ENCODE measurements at regions of chr16 and their contacts with region 1.

Region 1: GRCh38 chr16:87778830-87779579 is 13.2 kb upstream of the KLHDC4 start:
- DNase-seq: peak; percentile 96
- ATAC-seq: peak; percentile 89
- H3K4me3 ChIP-seq: no peak overlapping the region
- H3K4me3 Mint-ChIP-seq: peak overlapping the region; percentile 75
- H3K27ac ChIP-seq: no peak overlapping the region
- H3K27ac Mint-ChIP-seq: peak overlapping the region; percentile 83
- H3K4me1 ChIP-seq: peaks cover 22 to 40% of the 10 kb centered on the region in 2 donors
- H3K4me1 Mint-ChIP-seq: peaks cover 33% of the 10 kb centered on the region
- H3K27me3 ChIP-seq: no peaks in the 10 kb centered on the region
- H3K27me3 Mint-ChIP-seq: peaks cover 9% of the 10 kb centered on the region
- CTCF ChIP-seq: peak; percentile 93

Region 2: DNA sequence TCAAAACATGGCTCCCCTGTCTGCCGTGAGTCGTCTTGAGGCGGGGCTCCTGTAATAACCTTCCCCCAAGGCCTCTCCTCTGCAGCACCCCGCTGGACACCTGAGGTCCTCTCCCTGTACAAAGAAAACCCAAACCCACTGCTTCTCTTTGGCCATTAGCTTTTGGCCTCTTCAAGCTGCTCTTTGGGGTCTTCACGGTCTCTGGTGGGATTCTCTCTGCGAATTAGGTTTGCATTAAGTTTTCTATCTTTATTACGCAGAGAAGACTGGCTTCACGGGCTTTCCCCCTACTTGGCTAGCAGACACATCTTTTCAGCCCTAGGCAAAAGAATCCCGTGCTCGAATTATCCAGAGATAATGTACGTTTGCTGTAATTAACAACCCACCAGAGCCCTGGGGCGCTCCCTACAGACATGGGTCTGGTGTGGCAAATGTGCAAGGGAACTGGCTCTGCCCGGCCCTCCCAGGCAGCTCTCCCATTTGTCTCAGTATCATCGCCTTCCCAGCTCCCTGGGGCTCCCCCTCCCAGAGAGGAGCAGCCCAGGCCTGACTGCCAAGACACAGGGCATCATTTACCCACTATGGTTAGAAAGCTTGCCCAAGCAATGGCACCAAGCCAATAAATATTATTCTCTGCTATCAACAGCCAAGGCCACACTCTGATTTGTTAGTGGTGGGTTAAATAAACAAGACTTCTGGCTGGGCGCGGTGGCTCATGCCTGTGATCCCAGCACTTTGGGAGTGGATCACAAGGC is 11.4 kb after region 1 on chr16:
- CTCF ChIA-PET with region 1: interaction called, 23 read pairs
- POLR2A ChIA-PET with region 1: no interaction called
- intact Hi-C with region 1: no loop called
- DNase-seq: no peak
- ATAC-seq: no peak
- H3K4me3 ChIP-seq: no peak overlapping the region
- H3K4me3 Mint-ChIP-seq: no peak overlapping the region
- H3K27ac ChIP-seq: no peak overlapping the region
- H3K27ac Mint-ChIP-seq: no peak overlapping the region
- H3K4me1 ChIP-seq: no peaks in the 10 kb centered on the region
- H3K4me1 Mint-ChIP-seq: no peaks in the 10 kb centered on the region
- H3K27me3 ChIP-seq: no peaks in the 10 kb centered on the region
- H3K27me3 Mint-ChIP-seq: no peaks in the 10 kb centered on the region
- CTCF ChIP-seq: no peak

Region 3: GRCh38 chr16:87828071-87828971 is 49.3 kb after region 1 on chr16:
- CTCF ChIA-PET with region 1: interaction called, 11 read pairs
- POLR2A ChIA-PET with region 1: no interaction called
- intact Hi-C with region 1: no loop called
- DNase-seq: no peak
- ATAC-seq: no peak
- H3K4me3 ChIP-seq: no peak overlapping the region
- H3K4me3 Mint-ChIP-seq: no peak overlapping the region
- H3K27ac ChIP-seq: no peak overlapping the region
- H3K27ac Mint-ChIP-seq: no peak overlapping the region
- H3K4me1 ChIP-seq: peaks cover 1 to 16% of the 10 kb centered on the region in 2 donors
- H3K4me1 Mint-ChIP-seq: peaks cover 15% of the 10 kb centered on the region
- H3K27me3 ChIP-seq: no peaks in the 10 kb centered on the region
- H3K27me3 Mint-ChIP-seq: peaks cover 3% of the 10 kb centered on the region
- CTCF ChIP-seq: no peak

Region 4: DNA sequence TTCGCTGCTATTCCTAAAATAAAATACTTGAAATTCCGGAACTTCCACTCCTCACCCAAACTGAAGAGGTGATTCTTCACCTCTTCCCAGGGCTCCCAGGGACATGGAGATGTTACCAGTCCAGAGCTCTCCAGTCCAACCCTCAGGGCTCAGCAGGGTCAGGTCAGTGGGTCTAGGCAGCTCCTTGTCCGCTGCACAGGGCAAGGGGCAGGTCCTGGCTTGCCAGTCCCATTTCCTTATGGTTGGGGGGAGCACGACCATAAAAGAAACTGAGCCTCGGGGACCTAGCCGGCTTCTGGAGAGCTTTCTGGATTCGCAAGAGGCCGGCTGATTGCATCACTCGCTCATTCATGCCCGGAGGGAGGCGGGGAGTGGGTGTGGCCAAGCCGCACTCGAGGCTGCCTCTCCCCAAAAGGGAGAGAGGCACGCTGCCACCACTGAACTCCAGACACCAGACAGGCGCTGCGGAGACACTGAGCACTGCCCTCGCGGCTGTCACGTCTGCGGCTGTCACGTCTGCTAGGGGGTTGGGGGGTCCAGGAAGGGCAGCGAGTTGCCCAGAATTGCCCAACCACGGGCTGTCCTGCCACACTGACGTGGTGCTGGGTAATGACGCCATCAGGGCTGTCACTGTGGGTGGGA is 74.5 kb after region 1 on chr16:
- CTCF ChIA-PET with region 1: interaction called, 47 read pairs
- POLR2A ChIA-PET with region 1: interaction called, 3 read pairs
- intact Hi-C with region 1: loop called (anchors 5 kb)
- DNase-seq: peak; percentile 80
- ATAC-seq: peak; percentile 69
- H3K4me3 ChIP-seq: peak overlapping the region in 2 of 5 experiments; percentile 22 to 46
- H3K4me3 Mint-ChIP-seq: peak overlapping the region; percentile 71
- H3K27ac ChIP-seq: no peak overlapping the region
- H3K27ac Mint-ChIP-seq: peak overlapping the region; percentile 15
- H3K4me1 ChIP-seq: peaks cover 4 to 37% of the 10 kb centered on the region in 2 donors
- H3K4me1 Mint-ChIP-seq: peaks cover 29% of the 10 kb centered on the region
- H3K27me3 ChIP-seq: no peaks in the 10 kb centered on the region
- H3K27me3 Mint-ChIP-seq: no peaks in the 10 kb centered on the region
- CTCF ChIP-seq: no peak

Region 5: DNA sequence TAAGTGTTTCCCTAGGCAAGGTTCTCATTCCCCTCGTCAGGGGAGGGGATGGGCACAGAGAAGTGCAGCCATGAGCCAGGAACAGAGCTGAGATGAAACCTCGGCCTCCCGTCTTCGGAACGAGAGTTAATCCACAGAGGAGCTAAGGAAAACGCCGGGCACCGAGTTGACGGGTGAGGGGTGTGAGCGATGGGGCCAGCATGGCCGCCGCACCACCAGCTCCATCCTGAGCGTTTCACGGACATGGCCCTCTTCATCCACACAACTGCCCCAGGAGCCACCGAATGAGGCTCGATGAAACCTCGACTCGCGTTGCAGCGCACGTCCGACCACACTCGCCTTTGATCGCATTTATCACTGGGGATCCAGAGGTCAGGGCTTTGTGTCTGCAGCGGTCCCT is 135.8 kb after region 1 on chr16:
- CTCF ChIA-PET with region 1: interaction called, 15 read pairs
- POLR2A ChIA-PET with region 1: interaction called, 5 read pairs
- intact Hi-C with region 1: no loop called
- DNase-seq: no peak
- ATAC-seq: no peak
- H3K4me3 ChIP-seq: no peak overlapping the region
- H3K4me3 Mint-ChIP-seq: no peak overlapping the region
- H3K27ac ChIP-seq: no peak overlapping the region
- H3K27ac Mint-ChIP-seq: no peak overlapping the region
- H3K4me1 ChIP-seq: peaks cover under 1% of the 10 kb centered on the region in 2 donors
- H3K4me1 Mint-ChIP-seq: no peaks in the 10 kb centered on the region
- H3K27me3 ChIP-seq: peaks cover 0 to 10% (median 1%) of the 10 kb centered on the region in 4 experiments
- H3K27me3 Mint-ChIP-seq: peaks cover 25% of the 10 kb centered on the region
- CTCF ChIP-seq: no peak

Region 6: DNA sequence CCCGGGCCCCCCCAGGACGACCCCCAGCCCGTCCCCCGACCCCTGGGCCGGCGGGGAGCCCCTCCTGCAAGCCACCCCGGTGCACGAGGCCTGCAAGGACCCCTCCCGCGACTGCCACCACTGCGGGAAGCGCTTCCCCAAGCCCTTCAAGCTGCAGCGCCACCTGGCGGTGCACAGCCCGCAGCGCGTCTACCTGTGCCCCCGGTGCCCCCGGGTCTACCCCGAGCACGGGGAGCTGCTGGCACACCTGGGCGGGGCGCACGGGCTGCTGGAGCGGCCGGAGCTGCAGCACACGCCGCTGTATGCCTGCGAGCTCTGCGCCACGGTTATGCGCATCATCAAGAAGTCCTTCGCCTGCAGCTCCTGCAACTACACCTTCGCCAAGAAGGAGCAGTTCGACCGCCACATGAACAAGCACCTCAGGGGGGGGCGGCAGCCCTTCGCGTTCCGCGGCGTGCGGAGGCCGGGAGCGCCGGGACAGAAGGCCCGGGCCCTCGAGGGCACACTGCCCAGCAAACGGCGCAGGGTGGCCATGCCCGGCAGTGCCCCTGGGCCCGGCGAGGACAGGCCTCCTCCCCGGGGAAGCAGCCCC is 658.5 kb after region 1 on chr16:
- CTCF ChIA-PET with region 1: interaction called, 26 read pairs
- POLR2A ChIA-PET with region 1: no interaction called
- intact Hi-C with region 1: loop called (anchors 2 kb)
- DNase-seq: peak; percentile 79
- ATAC-seq: peak; percentile 82
- H3K4me3 ChIP-seq: no peak overlapping the region
- H3K4me3 Mint-ChIP-seq: no peak overlapping the region
- H3K27ac ChIP-seq: no peak overlapping the region
- H3K27ac Mint-ChIP-seq: no peak overlapping the region
- H3K4me1 ChIP-seq: no peaks in the 10 kb centered on the region
- H3K4me1 Mint-ChIP-seq: no peaks in the 10 kb centered on the region
- H3K27me3 ChIP-seq: no peaks in the 10 kb centered on the region
- H3K27me3 Mint-ChIP-seq: no peaks in the 10 kb centered on the region
- CTCF ChIP-seq: peak; percentile 87